Endothelial cell of umbilical vein (primary cell): ENCODE measurements at regions of chr4 and their contacts with region 1.

Region 1: DNA sequence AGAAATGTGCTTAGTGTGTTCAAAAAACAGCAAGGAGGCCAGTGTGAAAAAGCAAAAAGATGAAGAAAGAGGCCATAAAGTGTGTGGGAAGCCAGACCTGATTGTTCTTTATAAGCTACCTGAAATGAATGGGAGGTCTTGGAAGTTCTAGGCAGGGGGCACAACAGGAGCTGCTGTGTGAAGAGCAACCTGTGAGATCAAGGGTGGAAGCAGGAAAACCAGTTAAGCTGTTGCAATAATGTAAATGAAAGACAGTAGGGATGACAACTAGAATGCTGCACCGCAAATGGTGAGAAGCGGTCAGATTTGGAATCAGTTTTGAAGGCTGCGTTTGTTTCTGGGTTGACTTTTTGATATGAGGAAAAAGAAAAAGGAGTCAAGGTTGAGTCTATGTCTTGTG is 123.5 kb downstream of the TMEM144 start:
- DNase-seq: no peak
- H3K4me3 ChIP-seq: no peak overlapping the region
- H3K27ac ChIP-seq: no peak overlapping the region
- H3K4me1 ChIP-seq: no peaks in the 10 kb centered on the region
- H3K27me3 ChIP-seq: no peaks in the 10 kb centered on the region
- CTCF ChIP-seq: no peak
- POLR2A ChIP-seq: no peak

Region 2: GRCh38 chr4:158322109-158322508 is 11.7 kb before region 1 on chr4:
- CTCF ChIA-PET with region 1: interaction called, 12 read pairs
- POLR2A ChIA-PET with region 1: interaction called, 4 read pairs
- dilution Hi-C with region 1: no loop called
- intact Hi-C with region 1: no loop called
- DNase-seq: no peak
- H3K4me3 ChIP-seq: no peak overlapping the region
- H3K27ac ChIP-seq: no peak overlapping the region
- H3K4me1 ChIP-seq: no peaks in the 10 kb centered on the region
- H3K27me3 ChIP-seq: no peaks in the 10 kb centered on the region
- CTCF ChIP-seq: no peak
- POLR2A ChIP-seq: no peak

Region 3: DNA sequence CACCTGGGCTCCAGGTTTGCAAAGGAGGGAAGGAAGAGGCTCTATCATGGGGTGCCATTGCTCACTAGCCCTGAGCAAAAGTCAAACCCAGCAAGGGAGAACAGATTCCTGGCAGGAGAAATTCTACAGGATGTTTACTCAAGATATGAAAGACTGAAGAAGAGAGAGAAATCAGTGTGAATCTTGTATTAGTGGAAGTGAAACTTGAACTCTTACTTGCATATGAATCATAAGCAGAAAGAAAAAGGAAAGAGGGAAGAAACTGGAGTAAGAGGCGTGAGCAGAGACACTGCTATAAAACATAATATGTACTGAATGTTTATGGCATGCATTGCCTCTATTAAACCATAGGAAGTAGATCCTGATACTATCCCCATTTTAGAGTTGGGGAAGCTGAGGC is 277.0 kb after region 1 on chr4:
- CTCF ChIA-PET with region 1: no interaction called
- POLR2A ChIA-PET with region 1: no interaction called
- dilution Hi-C with region 1: no loop called
- intact Hi-C with region 1: no loop called
- DNase-seq: peak; percentile 6
- H3K4me3 ChIP-seq: no peak overlapping the region
- H3K27ac ChIP-seq: no peak overlapping the region
- H3K4me1 ChIP-seq: no peaks in the 10 kb centered on the region
- H3K27me3 ChIP-seq: no peaks in the 10 kb centered on the region
- CTCF ChIP-seq: no peak
- POLR2A ChIP-seq: no peak